Left cardiac atrium (tissue), 4 donors: ENCODE measurements at regions of chr1 and their contacts with region 1.

Region 1: GRCh38 chr1:156689035-156689952 is 12.1 kb upstream of the NES start:
- DNase-seq: peak; percentile 80
- ATAC-seq: peak; percentile 92 to 96

Region 2: DNA sequence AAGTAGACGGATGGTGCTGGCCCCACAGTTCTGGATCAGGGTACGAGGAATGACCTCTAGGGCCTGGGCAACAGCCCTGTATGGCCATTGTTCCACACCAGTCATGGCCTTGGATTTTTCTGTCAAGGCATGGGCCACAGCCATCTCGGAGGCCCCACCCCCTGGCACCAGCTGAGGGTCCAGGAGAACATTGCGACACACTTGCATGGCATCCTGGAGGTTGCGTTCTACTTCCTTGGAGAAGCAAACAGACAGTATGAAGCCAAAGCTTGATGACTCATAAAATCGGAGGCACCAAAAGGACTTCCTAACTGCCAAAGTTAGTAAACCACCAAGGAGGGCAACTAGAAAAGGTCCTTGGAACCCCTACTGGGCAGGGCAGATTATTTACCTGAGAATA is 378.3 kb before region 1 on chr1:
- intact Hi-C with region 1: no loop called
- DNase-seq: no peak
- ATAC-seq: peak; percentile 30

Region 3: DNA sequence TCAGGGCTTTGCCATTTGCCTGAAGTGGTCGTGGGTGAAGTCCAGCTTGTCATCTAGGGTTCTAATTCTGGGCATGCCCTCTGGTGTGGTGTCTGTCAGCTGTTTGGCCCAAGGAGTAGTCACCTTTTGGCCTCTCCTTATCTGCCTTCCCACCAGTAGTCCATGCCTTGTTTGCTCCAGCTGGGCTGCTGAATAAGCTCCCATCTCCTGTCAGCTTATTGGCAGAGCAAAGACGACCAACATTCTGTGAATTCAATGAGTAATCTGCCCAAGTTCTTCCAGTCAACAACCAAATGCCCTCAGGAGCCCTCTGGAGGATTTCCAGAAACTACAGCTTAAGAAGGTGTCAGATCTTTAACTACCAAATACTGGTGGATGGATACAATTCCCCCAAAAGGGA is 40.3 kb before region 1 on chr1:
- intact Hi-C with region 1: loop called in 1 of 2 experiments (anchors 5 kb)
- DNase-seq: no peak
- ATAC-seq: no peak